Transverse colon (tissue), 4 donors: ENCODE measurements at regions of chr2 and their contacts with region 1.

Region 1: GRCh38 chr2:124426625-124427024 is 401.5 kb downstream of the CNTNAP5 start:
- DNase-seq: no peak
- H3K4me3 ChIP-seq: no peak overlapping the region
- H3K27ac ChIP-seq: no peak overlapping the region
- H3K4me1 ChIP-seq: no peaks in the 10 kb centered on the region
- H3K27me3 ChIP-seq: no peaks in the 10 kb centered on the region
- CTCF ChIP-seq: no peak
- EP300 ChIP-seq: no peak
- POLR2A ChIP-seq: no peak

Region 2: DNA sequence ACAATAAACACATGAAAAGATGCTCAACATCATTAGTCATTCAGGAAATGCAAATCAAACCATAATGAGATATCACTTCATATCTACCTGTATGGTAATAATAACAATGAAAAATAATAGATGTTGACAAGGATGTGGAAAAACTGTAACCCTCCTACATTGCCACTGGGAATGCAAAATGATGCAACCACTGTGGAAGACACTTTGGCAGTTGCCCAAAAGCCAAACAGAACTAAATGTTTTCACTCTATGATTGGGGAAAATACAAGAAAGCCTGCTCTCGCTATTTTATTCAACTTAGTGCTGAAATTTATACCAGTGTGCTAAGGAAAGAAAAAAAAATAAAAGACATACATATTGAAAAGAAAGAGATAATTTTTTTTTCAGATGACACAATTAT is 533.0 kb after region 1 on chr2:
- in situ Hi-C with region 1: no loop called
- intact Hi-C with region 1: no loop called
- DNase-seq: no peak
- H3K4me3 ChIP-seq: no peak overlapping the region
- H3K27ac ChIP-seq: no peak overlapping the region
- H3K4me1 ChIP-seq: no peaks in the 10 kb centered on the region
- H3K27me3 ChIP-seq: no peaks in the 10 kb centered on the region
- CTCF ChIP-seq: no peak
- EP300 ChIP-seq: no peak
- POLR2A ChIP-seq: no peak

Region 3: DNA sequence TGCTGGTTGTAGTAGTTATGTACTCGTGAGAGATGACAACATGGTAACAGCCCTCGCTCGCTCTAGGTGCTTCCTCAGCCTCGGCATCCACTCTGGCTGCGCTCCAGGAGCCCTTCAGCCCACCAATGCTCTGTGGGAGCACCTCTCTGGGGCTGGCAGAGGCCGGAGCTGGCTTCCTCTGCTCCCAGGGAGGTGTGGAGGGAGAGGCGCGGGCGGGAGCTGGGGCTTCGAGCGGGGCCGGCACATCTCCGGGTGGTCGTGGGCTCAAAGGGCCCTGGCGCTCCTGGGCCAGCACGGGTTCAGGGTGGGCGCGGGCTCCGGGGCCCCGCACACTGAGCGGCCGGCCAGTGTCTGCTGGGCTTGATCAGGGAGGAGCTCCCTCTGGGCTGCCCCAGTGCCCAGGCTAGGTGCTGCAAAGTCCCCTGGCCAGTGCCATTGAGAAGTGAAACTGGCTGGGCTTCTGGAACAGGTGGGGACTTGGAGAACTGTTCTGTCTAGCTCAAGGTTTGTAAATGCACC is 610.6 kb after region 1 on chr2:
- in situ Hi-C with region 1: no loop called
- intact Hi-C with region 1: no loop called
- DNase-seq: no peak
- H3K4me3 ChIP-seq: no peak overlapping the region
- H3K27ac ChIP-seq: no peak overlapping the region
- H3K4me1 ChIP-seq: no peaks in the 10 kb centered on the region
- H3K27me3 ChIP-seq: no peaks in the 10 kb centered on the region
- CTCF ChIP-seq: no peak
- EP300 ChIP-seq: no peak
- POLR2A ChIP-seq: no peak

Region 4: DNA sequence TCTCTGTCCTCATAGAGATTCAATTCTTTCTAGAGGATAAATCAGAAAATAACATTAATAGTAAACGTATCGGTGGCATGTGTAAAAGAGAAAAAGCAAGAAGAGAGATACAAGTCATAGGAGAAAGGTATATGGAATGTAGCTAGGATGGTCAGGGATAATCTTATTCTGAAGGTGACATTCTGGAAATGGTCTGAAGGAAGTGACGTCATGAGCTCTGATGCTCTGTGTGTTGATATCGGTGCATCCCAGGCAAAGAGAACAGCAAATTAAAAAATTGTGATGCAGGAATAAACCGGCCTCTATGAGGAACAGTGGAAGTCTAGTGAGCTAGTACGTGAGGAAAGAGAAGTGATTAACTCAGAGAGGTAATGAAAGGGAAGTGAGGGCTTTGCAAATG is 814.2 kb after region 1 on chr2:
- in situ Hi-C with region 1: no loop called
- intact Hi-C with region 1: loop called (anchors 5 kb)
- DNase-seq: no peak
- H3K4me3 ChIP-seq: no peak overlapping the region
- H3K27ac ChIP-seq: no peak overlapping the region
- H3K4me1 ChIP-seq: no peaks in the 10 kb centered on the region
- H3K27me3 ChIP-seq: no peaks in the 10 kb centered on the region
- CTCF ChIP-seq: no peak
- EP300 ChIP-seq: no peak
- POLR2A ChIP-seq: no peak